HEK293 (cell line): ENCODE measurements at regions of chr16 and their contacts with region 1.

Region 1: DNA sequence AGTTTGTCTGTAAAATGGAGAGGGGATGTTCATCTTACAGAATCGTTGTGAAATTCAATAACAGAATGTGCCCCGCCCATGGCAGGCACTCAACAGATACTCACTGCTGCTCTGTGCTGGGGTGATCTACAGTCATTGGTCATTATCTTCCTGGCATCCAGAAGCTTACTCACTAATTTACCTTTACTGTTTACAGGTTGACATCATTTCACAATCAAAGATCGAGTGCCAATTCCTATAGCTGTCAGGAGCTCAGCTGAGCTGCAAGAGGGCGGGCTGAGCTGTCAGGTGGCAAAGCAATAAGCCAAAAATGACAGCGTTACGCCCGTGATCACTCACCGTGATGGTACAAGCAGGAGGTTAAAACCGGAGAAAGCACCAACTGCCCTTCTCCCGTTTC is 51.2 kb downstream of the LITAF start:
- H3K4me3 ChIP-seq: no peak overlapping the region
- H3K27ac ChIP-seq: no peak overlapping the region
- H3K4me1 ChIP-seq: no peaks in the 10 kb centered on the region
- CTCF ChIP-seq: no peak

Region 2: GRCh38 chr16:11639925-11640899 is 104.7 kb after region 1 on chr16:
- CTCF ChIA-PET with region 1: interaction called, 24 read pairs
- POLR2A ChIA-PET with region 1: no interaction called
- H3K4me3 ChIP-seq: no peak overlapping the region
- H3K27ac ChIP-seq: no peak overlapping the region
- H3K4me1 ChIP-seq: 0 out of 2 replicates have a peak, but pooled peaks cover 2% of the 10 kb centered on the region
- CTCF ChIP-seq: no peak